Breast epithelium (tissue), 4 donors: ENCODE measurements at regions of chr1 and their contacts with region 1.

Region 1: DNA sequence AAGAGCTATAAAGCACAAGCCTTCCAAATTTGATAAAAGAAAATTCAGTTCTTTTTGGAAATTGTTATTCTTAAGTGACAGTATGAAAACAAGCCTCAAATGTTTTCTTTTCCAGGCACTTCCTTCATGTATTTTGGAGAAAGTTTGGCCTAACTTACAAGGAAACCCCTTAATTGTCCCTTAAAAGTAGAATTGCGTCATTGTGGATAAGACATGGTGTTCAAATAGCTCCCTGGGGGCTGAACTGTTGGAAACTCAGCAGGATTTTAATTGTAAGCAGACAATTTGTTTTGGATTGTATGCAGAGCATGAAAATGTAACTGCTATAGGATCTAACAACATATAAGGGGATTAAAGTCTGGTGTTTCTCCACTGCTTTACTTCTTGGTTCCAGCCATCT is 35.4 kb upstream of the FGGY start:
- DNase-seq: no peak
- H3K4me3 ChIP-seq: no peak overlapping the region
- H3K27ac ChIP-seq: peak overlapping the region in 1 of 2 donors; percentile 66
- H3K4me1 ChIP-seq: peaks cover 0 to 5% of the 10 kb centered on the region in 2 donors
- H3K27me3 ChIP-seq: no peaks in the 10 kb centered on the region
- CTCF ChIP-seq: no peak
- POLR2A ChIP-seq: no peak

Region 2: DNA sequence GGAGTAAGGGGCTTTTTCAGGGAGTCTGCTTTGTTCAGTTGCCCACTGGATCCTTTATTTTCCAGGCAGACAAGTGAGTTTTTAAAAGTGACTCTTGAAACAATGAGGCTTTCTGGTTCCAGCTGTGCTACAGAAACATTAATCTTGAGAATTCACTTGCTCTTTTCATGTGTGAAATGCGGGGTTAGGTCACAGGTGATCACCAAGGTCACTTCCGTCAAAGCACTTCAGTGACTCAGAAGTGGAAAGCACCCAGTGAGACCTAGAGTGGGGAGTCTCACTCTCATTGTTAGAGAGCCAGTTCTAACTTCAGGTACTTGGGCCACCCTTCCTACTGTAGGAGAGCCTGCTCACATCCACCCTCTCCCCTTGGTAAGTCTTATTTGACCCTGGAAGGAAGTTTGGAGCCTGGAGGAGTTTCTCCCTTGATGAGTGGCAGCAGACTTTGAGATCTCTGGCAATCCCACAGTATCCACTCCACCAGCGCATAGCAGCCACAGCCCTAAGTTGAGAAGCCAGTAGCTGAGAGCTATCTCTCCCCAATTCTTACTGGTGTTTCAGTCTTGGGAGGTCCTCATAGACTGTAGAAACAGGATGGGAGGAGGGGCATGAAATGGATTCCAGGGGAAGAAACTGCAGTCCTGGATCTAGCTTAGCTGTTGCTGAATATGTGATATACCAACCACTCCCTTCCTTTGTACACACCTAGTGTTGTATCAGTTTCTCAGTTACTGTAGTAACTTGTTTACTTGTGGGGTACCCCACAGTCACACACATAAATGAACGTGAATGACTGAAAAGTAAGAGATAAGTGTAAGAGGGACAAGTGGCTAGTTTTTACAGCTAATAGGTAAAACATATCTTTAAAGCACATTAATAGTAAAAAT is 687.6 kb before region 1 on chr1:
- intact Hi-C with region 1: no loop called
- DNase-seq: no peak
- H3K4me3 ChIP-seq: peak overlapping the region in 2 of 3 donors; percentile 68 to 74
- H3K27ac ChIP-seq: peak overlapping the region; percentile 86 to 98
- H3K4me1 ChIP-seq: no peaks in the 10 kb centered on the region
- H3K27me3 ChIP-seq: peaks cover 0 to 3% of the 10 kb centered on the region in 2 donors
- CTCF ChIP-seq: no peak
- POLR2A ChIP-seq: no peak

Region 3: DNA sequence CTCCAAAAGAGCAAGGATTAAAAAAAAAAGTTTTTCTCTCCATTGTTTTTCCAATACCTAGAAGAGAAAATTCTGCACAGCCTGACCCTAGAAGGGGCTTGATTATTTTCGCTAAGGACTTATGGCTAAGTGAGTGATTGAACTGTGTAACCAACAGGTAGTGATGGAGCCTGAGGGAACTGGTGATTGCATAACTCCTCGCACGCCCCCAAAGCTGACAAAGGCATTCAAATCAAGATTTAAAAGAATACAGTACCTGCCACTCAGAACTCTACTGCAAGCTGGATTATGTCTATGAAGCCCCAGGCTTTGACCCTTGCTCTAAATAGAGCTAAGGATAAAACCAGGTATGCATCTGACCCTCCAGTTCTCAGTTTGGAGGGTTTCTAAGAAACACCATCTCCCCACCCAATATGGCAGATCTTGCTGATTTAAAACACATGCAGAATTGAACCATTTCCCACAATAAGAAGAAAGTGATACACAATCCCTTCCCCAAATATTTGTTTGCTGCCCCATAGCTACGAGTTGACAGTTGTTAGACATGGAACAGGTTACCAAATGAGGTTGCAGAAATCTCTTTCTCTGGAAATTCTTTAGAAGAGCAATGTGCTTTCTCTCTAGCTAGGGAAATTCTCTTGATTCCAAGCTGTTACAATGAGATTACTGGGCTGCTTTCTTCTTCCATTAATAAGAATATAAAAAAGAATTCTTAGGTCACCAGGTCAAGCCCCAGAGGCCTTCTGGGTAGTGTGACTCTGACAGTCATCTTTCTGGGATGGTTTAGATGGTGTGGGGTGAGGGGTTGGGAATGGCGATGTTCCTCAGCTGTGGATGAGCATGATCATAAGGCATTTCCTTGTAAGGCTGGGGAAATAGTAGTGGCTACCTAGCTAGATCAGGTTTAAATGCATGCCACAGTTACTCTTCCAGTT is 70.4 kb after region 1 on chr1:
- intact Hi-C with region 1: loop called (anchors 2 kb)
- DNase-seq: no peak
- H3K4me3 ChIP-seq: no peak overlapping the region
- H3K27ac ChIP-seq: no peak overlapping the region
- H3K4me1 ChIP-seq: no peaks in the 10 kb centered on the region
- H3K27me3 ChIP-seq: no peaks in the 10 kb centered on the region
- CTCF ChIP-seq: no peak
- POLR2A ChIP-seq: no peak